Activated naive CD4-positive, alpha-beta T cell treated with anti-CD3 and anti-CD28 coated beads for 36 hours (primary cell): ENCODE measurements at regions of chr7 and their contacts with region 1.

Region 1: GRCh38 chr7:20172736-20173334 is 44.3 kb downstream of the MACC1 start:
- DNase-seq: peak; percentile 39
- H3K4me3 Mint-ChIP-seq: no peak overlapping the region
- H3K27ac Mint-ChIP-seq: no peak overlapping the region
- H3K4me1 Mint-ChIP-seq: no peaks in the 10 kb centered on the region
- H3K27me3 Mint-ChIP-seq: no peaks in the 10 kb centered on the region

Region 2: GRCh38 chr7:19713676-19714075 is 459.2 kb before region 1 on chr7:
- CTCF ChIA-PET with region 1: interaction called, 7 read pairs
- intact Hi-C with region 1: loop called (anchors 1 kb)
- DNase-seq: peak; percentile 66
- H3K4me3 Mint-ChIP-seq: no peak overlapping the region
- H3K27ac Mint-ChIP-seq: no peak overlapping the region
- H3K4me1 Mint-ChIP-seq: peaks cover 15% of the 10 kb centered on the region
- H3K27me3 Mint-ChIP-seq: peaks cover under 1% of the 10 kb centered on the region

Region 3: DNA sequence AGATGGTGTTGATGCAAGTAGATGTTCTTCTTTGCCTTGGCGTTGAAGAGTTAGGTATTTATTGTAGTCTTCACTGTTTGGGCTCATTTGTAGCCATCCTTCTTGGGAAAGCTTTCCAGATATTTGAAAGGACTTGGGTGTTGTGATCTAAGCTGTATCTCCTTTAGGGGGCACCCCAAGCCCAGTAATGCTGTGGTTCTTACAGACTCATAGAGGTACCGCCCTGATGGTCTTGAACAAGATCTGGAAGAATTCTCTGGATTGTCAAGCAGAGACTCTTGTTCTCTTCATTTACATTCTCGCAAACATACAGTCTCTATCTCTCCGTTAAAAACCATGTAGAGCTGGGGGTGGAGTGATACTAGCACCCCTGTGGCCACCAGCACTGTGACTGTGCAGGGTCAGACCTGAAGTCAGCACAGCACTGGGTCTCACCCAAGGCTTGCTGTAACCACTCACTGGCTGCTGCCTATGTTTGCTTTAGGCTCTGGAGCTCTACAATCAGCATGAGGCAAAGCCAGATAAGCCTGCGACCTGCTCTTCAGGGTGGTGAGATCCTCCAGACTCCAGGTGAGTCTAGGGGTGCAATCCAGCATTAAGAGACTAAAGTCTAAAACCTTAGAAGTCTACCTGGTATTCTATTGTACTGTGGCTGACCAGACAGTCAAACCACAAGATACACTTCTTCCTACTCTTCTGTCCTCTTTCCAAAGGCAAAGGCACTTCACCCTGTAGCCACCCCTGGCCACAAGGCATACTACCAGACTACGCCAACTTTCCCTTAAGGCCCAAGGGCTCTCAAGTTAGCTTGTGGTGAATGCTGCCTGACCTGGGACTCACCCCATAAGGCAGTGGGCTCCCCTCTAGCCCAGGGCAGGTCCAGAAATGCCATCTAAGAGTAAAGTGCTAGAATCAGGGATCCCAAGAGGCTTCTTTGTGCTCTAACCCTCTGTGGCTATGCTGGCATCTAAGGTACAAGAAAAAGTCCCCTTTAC is 189.7 kb before region 1 on chr7:
- CTCF ChIA-PET with region 1: no interaction called
- intact Hi-C with region 1: loop called (anchors 2 kb)
- DNase-seq: peak; percentile 14
- H3K4me3 Mint-ChIP-seq: no peak overlapping the region
- H3K27ac Mint-ChIP-seq: no peak overlapping the region
- H3K4me1 Mint-ChIP-seq: no peaks in the 10 kb centered on the region
- H3K27me3 Mint-ChIP-seq: no peaks in the 10 kb centered on the region

Region 4: DNA sequence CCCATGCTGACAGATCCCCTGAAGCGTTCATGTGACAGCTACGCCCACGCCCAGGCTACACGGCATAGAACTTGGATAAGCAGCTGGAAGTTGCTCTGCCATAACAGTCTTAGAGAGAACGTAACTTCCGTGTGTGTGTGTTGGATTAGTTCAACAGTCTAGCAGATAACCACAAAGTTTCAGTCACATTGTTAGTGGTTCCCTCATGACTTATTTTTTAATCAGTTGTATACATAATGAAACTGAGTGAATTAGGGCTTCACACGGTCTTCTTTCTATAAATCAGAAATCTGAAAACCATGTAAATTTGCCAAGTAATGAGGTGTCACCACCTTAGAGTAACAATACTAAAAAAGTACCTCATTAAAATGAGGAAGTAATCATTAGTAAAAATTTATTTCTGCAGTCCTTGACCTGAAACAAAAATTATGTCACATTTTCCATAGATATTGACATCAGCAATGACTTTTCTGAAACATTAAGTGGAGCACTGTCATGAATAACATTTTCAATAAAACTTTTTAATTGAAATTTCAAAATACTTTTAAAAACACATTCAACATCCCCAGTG is 66.0 kb after region 1 on chr7:
- CTCF ChIA-PET with region 1: no interaction called
- intact Hi-C with region 1: no loop called
- DNase-seq: peak; percentile 14
- H3K4me3 Mint-ChIP-seq: no peak overlapping the region
- H3K27ac Mint-ChIP-seq: no peak overlapping the region
- H3K4me1 Mint-ChIP-seq: peaks cover 4% of the 10 kb centered on the region
- H3K27me3 Mint-ChIP-seq: peaks cover 15% of the 10 kb centered on the region